ENCODE measurements at regions of chr3 and their contacts with region 1.

Region 1: DNA sequence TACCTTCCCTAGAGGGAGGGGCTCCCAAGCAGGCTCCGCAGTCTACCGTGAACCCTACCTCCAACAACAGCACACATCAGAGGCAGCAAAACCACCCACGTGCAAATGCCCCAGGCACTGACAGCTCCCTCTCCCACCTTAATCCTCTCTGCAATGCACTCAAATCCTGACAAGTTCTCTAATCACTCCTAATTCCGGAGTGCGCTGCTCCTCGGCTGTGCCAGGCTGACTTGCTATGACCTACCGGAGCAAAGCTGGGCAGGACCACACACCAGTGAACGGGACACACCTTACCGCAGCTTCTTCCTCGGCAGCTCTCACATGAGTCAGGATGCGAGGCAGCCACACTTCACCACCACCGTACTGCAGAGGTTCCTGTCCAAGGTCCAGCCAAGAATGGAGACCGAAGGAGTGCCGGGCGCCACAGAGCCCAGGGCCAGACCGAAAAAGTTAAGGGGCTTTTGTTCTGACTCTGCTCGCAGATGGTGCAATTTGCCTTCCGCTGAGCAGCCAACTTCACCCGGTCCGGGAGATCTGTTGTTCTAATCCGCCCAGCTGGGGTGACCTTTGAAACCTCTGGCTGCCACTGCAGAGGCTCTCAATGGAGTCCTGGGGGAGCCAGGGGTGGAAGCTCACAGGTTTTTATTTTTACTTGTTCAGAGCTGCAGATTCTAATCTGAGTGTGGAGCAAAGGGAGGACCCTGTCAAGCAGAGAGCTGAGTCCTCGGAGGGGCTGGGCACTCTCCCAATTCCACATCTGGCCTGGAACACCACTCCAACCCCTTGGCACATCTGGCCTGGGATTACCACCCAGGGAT is 84.4 kb downstream of the MYLK start:
- DNase-seq: peak; percentile 94
- H3K4me3 ChIP-seq: peak overlapping the region in 2 of 3 experiments; percentile 0 to 27
- H3K27ac ChIP-seq: peak overlapping the region; percentile 43
- H3K4me1 ChIP-seq: peaks cover 21% of the 10 kb centered on the region
- H3K27me3 ChIP-seq: no peaks in the 10 kb centered on the region
- CTCF ChIP-seq: no peak

Region 2: GRCh38 chr3:123723522-123724168 is 76.1 kb before region 1 on chr3:
- CTCF ChIA-PET with region 1: no interaction called
- dilution Hi-C with region 1: no loop called
- in situ Hi-C with region 1: no loop called
- intact Hi-C with region 1: loop called (anchors 2 kb)
- DNase-seq: peak; percentile 66
- H3K4me3 ChIP-seq: no peak overlapping the region
- H3K27ac ChIP-seq: no peak overlapping the region
- H3K4me1 ChIP-seq: peaks cover 7% of the 10 kb centered on the region
- H3K27me3 ChIP-seq: no peaks in the 10 kb centered on the region
- CTCF ChIP-seq: peak; percentile 87 to 92

Region 3: GRCh38 chr3:123732473-123733157 is 67.1 kb before region 1 on chr3:
- CTCF ChIA-PET with region 1: no interaction called
- dilution Hi-C with region 1: no loop called
- in situ Hi-C with region 1: no loop called
- intact Hi-C with region 1: loop called (anchors 2 kb)
- DNase-seq: peak; percentile 97
- H3K4me3 ChIP-seq: no peak overlapping the region
- H3K27ac ChIP-seq: peak overlapping the region; percentile 82
- H3K4me1 ChIP-seq: peaks cover 38% of the 10 kb centered on the region
- H3K27me3 ChIP-seq: no peaks in the 10 kb centered on the region
- CTCF ChIP-seq: no peak

Region 4: DNA sequence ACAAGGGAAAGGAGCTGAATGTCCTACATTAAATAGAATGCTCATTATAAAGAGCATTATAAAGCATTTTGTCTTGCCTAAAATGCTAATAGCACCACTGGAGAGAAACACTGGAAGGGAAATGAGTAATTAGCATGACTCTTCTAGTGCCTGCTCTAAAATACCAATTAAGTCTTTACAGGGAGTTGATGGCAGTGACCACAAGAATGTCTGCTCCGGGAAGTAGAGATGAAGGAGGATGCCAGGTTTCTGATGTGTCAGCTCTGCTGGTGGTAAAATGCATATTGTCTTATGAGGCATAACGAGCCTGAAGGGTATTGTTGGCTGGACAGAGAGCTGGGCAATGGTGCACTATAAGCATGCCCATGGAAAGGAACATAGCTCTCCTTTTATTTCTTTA is 34.9 kb after region 1 on chr3:
- CTCF ChIA-PET with region 1: no interaction called
- dilution Hi-C with region 1: no loop called
- in situ Hi-C with region 1: no loop called
- intact Hi-C with region 1: loop called (anchors 2 kb)
- DNase-seq: peak; percentile 94
- H3K4me3 ChIP-seq: no peak overlapping the region
- H3K27ac ChIP-seq: peak overlapping the region; percentile 58
- H3K4me1 ChIP-seq: peaks cover 62% of the 10 kb centered on the region
- H3K27me3 ChIP-seq: no peaks in the 10 kb centered on the region
- CTCF ChIP-seq: no peak

Region 5: GRCh38 chr3:123893012-123893411 is 93.3 kb after region 1 on chr3:
- CTCF ChIA-PET with region 1: no interaction called
- dilution Hi-C with region 1: no loop called
- in situ Hi-C with region 1: no loop called
- intact Hi-C with region 1: no loop called
- DNase-seq: no peak
- H3K4me3 ChIP-seq: no peak overlapping the region
- H3K27ac ChIP-seq: no peak overlapping the region
- H3K4me1 ChIP-seq: no peaks in the 10 kb centered on the region
- H3K27me3 ChIP-seq: no peaks in the 10 kb centered on the region
- CTCF ChIP-seq: no peak

Region 6: DNA sequence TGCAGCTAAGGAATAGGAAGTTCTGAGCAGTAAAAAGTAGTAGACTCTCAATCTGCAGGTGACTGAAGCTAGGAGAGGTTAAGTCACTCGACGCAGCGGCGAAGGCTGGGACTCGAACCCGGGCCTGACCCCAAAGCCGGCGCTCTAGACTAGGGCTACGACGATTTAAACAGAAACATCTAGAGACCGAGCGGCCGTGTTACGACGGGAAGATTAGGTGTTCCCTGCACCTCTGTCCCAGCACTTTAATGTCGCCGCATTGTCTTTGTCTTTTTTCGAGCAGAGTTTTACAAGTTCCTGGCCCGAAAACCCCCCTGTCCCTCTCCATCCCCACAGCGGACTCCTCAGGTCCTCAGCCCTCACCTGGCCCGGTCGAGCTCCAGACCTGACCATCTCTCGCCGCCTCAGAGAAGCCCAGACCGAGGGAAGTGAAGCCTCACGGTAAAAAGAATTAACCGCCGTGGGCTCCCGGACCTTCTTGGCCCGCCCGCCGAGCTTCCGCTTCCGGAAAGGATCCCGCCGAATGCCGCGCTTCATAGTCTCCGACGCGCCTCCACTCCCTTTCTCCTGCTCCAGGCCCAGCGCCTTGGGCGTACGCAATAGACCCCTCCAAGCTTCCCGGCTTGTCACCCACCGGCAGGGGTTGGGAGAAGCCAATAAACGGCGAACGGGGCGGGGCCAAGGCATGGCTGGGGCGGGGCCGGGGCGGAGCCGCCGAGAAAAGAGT is 161.2 kb after region 1 on chr3 and contains the start of gene CCDC14:
- CTCF ChIA-PET with region 1: no interaction called
- dilution Hi-C with region 1: no loop called
- in situ Hi-C with region 1: no loop called
- intact Hi-C with region 1: loop called (anchors 10 kb)
- DNase-seq: peak; percentile 93
- H3K4me3 ChIP-seq: peak within 1 kb of the TSS; percentile 83 to 91 (median 84)
- H3K27ac ChIP-seq: peak within 1 kb of the TSS; percentile 85
- H3K4me1 ChIP-seq: peaks cover 6% of the 10 kb centered on the region
- H3K27me3 ChIP-seq: no peaks in the 10 kb centered on the region
- CTCF ChIP-seq: no peak
- total RNA-seq, gene CCDC14: 34.1 to 39.7 TPM

Measured in mammary epithelial cell (primary cell).